ENCODE measurements at regions of chr21 and their contacts with region 1.

Region 1: GRCh38 chr21:45973659-45974072 is 7.9 kb upstream of the COL6A1 start:
- DNase-seq: peak; percentile 78
- ATAC-seq: peak; percentile 55
- H3K4me3 ChIP-seq: peak overlapping the region; percentile 58
- H3K27ac ChIP-seq: peak overlapping the region; percentile 87
- H3K4me1 ChIP-seq: peaks cover 28% of the 10 kb centered on the region
- H3K27me3 ChIP-seq: peaks cover 24% of the 10 kb centered on the region
- CTCF ChIP-seq: peak; percentile 68

Region 2: GRCh38 chr21:46097336-46098293 is 123.9 kb after region 1 on chr21 and contains the start of gene COL6A2:
- intact Hi-C with region 1: loop called (anchors 10 kb)
- DNase-seq: peak; percentile 72
- ATAC-seq: peak; percentile 78
- H3K4me3 ChIP-seq: peak within 1 kb of the TSS; percentile 57
- H3K27ac ChIP-seq: peak within 1 kb of the TSS; percentile 75
- H3K4me1 ChIP-seq: peaks cover 5% of the 10 kb centered on the region
- H3K27me3 ChIP-seq: peaks cover 44% of the 10 kb centered on the region
- CTCF ChIP-seq: peak; percentile 26
- total RNA-seq, gene COL6A2: 269 TPM